ENCODE measurements at regions of chr10 and their contacts with region 1.

Region 1: DNA sequence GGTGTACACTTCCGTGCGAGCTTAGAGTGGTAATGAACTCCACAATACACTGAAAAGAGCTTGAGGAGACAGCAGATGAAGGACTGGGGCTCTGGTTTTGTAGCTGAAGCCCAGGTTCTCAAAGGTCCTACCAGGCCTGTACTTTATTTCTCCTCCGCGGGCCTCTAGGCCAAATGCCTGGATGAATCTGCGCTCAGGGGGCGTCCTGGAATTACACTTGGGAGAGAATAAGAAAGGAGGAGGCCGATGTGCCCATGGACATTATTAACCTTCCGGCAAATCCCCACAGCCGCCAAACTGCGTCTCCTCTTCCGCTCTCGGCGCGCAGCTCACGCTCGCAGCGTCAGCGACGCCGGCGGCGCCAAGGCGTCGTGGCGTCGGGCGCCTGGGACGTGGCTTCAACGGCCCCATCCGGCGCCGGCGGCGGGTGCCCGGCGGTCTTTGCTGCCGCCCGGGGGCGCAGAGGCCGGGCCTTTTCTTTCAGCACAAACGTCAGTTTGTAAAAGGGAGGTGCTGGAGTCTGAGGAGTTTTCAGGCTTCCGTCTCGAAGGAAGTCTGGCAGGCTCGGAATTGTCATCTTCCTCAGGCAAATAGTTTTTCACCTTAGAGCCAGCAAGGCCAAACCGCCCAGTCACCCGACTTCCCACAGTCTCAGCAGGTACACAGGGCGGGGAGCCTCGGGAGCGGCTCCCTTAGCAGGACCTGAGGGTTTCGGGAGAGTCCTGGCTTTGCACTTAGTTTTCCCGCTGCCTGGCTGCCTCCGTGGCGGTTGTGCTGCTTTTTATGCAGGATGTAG is at the start of gene CCDC7:
- DNase-seq: peak; percentile 92
- ATAC-seq: peak; percentile 99
- total RNA-seq, gene CCDC7: 19.0 TPM

Region 2: DNA sequence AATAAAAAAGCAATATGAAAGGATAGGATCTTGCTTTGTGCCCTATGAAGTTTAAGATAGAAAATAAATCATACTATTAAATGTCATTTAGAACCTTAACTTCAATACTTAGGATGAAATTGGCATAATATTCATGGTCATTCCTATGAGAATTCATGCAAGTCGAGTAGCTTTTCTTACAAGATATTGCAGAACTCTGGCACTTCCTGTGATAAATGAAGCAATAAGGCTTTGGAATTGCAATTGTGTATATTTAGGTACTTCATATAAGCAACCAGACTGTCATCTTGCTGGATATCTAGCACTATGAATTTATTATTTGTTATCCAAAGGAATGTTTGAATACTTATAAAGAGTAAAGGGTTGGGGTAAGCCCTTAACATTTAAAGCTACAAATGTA is 1530.8 kb before region 1 on chr10:
- intact Hi-C with region 1: no loop called
- DNase-seq: no peak
- ATAC-seq: no peak

Region 3: GRCh38 chr10:32263300-32263699 is 182.6 kb before region 1 on chr10:
- intact Hi-C with region 1: loop called (anchors 10 kb)
- DNase-seq: no peak
- ATAC-seq: peak; percentile 22

Region 4: DNA sequence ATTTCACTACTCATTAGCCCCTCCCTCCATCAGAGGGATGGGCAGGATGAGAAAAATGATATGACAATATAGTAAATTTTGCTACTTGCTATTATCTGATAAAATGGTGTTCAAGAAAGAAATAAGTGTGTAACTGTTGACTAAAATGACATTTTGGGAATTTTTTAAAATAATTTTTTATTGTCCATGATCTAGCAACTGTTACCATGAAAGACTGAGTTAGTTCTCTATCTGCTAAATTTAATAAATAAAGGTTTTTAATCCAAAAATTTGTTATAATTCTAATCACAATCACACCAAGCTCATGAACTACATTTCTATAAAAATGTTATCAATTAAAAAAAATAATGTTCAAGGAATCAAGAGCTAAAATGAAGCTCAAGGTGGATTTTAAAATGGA is 70.3 kb before region 1 on chr10:
- intact Hi-C with region 1: loop called (anchors 2 kb)
- DNase-seq: no peak
- ATAC-seq: no peak

Measured in Right ventricle myocardium superior (tissue), 1 donor.